Activated T-helper 1 cell treated with anti-CD3 and anti-CD28 coated beads, Interleukin-12 subunit alpha, Interleukin-12 subunit beta, Interleukin-2, Interleukin-4 antibody, amounts not matched to agents 30 ng/mL and 10 ng/mL and 1 ng/mL, durations not matched to agents 14 hours and 24 hours and 36 hours (primary cell): ENCODE measurements at regions of chr22 and their contacts with region 1.

Region 1: GRCh38 chr22:40036591-40037225 is 42.0 kb downstream of the FAM83F start:
- DNase-seq: peak; percentile 23
- H3K4me3 Mint-ChIP-seq: no peak overlapping the region
- H3K27ac Mint-ChIP-seq: no peak overlapping the region
- H3K4me1 Mint-ChIP-seq: no peaks in the 10 kb centered on the region
- H3K27me3 Mint-ChIP-seq: peaks cover 10% of the 10 kb centered on the region

Region 2: GRCh38 chr22:39343259-39344048 is 693.3 kb before region 1 on chr22:
- intact Hi-C with region 1: loop called (anchors 10 kb)
- DNase-seq: peak; percentile 42
- H3K4me3 Mint-ChIP-seq: no peak overlapping the region
- H3K27ac Mint-ChIP-seq: no peak overlapping the region
- H3K4me1 Mint-ChIP-seq: no peaks in the 10 kb centered on the region
- H3K27me3 Mint-ChIP-seq: peaks cover 27% of the 10 kb centered on the region

Region 3: GRCh38 chr22:39496131-39496838 is 540.4 kb before region 1 on chr22:
- intact Hi-C with region 1: loop called (anchors 1 kb)
- DNase-seq: peak; percentile 40
- H3K4me3 Mint-ChIP-seq: no peak overlapping the region
- H3K27ac Mint-ChIP-seq: no peak overlapping the region
- H3K4me1 Mint-ChIP-seq: peaks cover 16% of the 10 kb centered on the region
- H3K27me3 Mint-ChIP-seq: peaks cover 7% of the 10 kb centered on the region

Region 4: DNA sequence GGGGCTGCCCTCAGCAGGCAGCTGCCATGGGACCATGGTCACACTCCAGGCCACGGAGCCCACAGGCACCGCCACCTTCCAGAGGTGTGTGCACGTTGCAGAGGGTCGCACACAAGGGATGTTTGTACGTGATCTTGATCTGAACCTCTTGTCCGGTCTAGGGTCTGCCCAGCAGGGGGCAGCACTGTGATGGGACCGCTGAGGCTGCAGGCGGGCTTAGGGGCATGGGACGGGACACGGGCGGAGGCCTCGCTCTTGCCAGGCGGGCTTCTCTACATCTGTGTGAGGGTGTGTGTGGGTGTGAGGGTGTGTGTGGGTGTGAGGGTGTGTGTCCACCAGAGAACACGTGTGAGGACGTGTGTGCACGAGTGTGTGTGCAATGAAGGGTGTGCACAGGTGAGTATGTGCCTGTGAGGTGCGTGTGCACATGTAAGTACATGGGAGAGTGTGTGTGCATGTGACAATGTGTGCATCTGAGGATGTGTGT is 413.8 kb before region 1 on chr22:
- intact Hi-C with region 1: loop called (anchors 5 kb)
- DNase-seq: peak; percentile 42
- H3K4me3 Mint-ChIP-seq: no peak overlapping the region
- H3K27ac Mint-ChIP-seq: no peak overlapping the region
- H3K4me1 Mint-ChIP-seq: peaks cover 3% of the 10 kb centered on the region
- H3K27me3 Mint-ChIP-seq: peaks cover 6% of the 10 kb centered on the region

Region 5: DNA sequence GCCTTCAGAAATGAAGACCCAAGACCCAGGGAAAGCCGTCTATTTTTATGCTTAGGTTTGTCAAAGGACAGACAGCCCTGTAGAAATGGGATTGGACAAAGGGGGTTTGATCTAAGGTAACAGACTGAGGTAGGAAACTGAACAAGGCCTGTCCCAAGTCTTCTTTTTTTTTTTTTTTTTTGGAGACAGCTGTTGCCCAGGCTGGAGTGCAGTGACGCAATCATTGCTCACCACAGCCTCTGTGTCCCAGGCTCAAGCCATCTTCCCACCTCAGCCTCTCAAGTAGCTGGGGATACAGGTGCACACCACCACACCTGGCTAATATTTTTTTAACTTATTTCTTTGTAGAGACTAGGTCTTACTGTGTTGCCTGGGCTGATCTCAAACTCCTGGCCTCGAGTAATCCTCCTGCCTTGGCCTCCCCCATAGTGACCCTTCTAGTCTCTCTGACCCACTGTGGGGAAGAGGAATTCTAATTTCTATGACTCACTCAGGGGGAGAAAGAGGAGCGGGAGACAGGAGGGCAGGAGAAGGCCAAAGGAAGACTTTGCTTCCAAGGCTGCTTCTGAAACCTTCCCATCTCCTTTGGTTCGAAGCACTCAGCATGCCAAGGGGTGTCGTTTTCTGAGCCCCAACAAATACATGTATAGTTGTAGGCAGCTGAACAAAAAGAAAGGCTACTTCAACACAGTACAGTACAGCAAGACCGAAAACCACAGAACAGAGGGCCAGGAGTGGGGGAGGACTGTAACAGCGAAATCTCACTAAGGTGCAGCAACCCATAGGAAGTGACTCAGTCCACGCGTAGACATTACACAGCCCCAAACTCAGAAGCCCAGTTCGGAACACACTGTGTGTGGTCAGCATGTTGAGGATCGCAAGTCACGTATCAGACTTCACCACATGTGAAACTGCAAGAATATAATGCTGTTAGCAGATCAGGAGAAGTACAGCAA is 75.6 kb before region 1 on chr22:
- intact Hi-C with region 1: no loop called
- DNase-seq: peak; percentile 71
- H3K4me3 Mint-ChIP-seq: peak overlapping the region; percentile 73
- H3K27ac Mint-ChIP-seq: peak overlapping the region; percentile 92
- H3K4me1 Mint-ChIP-seq: peaks cover 54% of the 10 kb centered on the region
- H3K27me3 Mint-ChIP-seq: no peaks in the 10 kb centered on the region

Region 6: DNA sequence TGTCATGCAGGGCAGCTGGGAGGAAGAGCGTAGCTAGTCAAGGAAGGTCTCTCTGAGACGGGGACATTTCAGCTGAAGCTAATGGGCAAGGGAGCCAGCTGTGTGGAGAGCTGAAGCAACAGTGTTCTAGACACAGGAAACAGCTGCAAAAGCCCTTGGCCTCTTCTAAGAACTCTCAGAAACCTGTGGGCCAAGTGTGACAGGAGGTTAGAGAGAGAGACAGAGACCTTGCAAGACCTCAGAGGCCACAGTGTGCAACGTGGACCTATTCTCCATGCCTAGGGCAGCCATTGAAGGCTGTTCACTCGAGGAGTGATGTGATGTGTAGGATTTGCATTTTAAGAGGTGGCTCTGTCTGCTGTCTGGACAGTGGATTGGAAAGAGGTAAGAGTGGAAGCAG is 92.3 kb after region 1 on chr22:
- intact Hi-C with region 1: no loop called
- DNase-seq: peak; percentile 31
- H3K4me3 Mint-ChIP-seq: peak overlapping the region; percentile 55
- H3K27ac Mint-ChIP-seq: peak overlapping the region; percentile 82
- H3K4me1 Mint-ChIP-seq: peaks cover 32% of the 10 kb centered on the region
- H3K27me3 Mint-ChIP-seq: no peaks in the 10 kb centered on the region